A673 (cell line): ENCODE measurements at regions of chr16 and their contacts with region 1.

Region 1: GRCh38 chr16:60013076-60013475 is 1279.0 kb upstream of the GOT2 start:
- DNase-seq: no peak
- H3K4me3 ChIP-seq: no peak overlapping the region
- H3K27ac ChIP-seq: no peak overlapping the region
- H3K4me1 ChIP-seq: no peaks in the 10 kb centered on the region
- H3K27me3 ChIP-seq: peaks cover 5% of the 10 kb centered on the region
- CTCF ChIP-seq: no peak

Region 2: DNA sequence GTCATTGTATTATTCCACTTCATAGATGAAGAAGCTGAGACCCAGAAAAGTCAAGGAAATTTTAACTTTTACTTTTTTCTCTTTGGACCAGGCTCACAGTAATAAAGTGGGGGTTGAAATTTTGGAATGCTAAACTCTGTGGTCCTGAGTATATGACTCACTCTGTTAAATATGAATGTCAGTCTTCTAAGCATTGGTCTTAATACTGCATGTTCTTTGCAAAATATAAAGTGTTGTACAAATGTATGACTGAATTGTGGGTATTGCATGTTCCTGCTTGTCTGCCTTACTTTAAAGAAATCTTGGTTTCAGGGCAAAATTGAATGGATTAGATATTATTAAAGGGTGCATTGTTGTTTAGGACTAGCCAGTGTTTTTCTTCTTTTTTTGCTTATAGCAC is 328.2 kb before region 1 on chr16:
- CTCF ChIA-PET with region 1: no interaction called
- POLR2A ChIA-PET with region 1: no interaction called
- intact Hi-C with region 1: no loop called
- DNase-seq: no peak
- H3K4me3 ChIP-seq: no peak overlapping the region
- H3K27ac ChIP-seq: no peak overlapping the region
- H3K4me1 ChIP-seq: no peaks in the 10 kb centered on the region
- H3K27me3 ChIP-seq: no peaks in the 10 kb centered on the region
- CTCF ChIP-seq: no peak

Region 3: GRCh38 chr16:59740858-59741257 is 272.2 kb before region 1 on chr16:
- CTCF ChIA-PET with region 1: no interaction called
- POLR2A ChIA-PET with region 1: no interaction called
- intact Hi-C with region 1: no loop called
- DNase-seq: no peak
- H3K4me3 ChIP-seq: no peak overlapping the region
- H3K27ac ChIP-seq: no peak overlapping the region
- H3K4me1 ChIP-seq: no peaks in the 10 kb centered on the region
- H3K27me3 ChIP-seq: no peaks in the 10 kb centered on the region
- CTCF ChIP-seq: no peak

Region 4: GRCh38 chr16:59997706-59998105 is 15.4 kb before region 1 on chr16:
- CTCF ChIA-PET with region 1: no interaction called
- POLR2A ChIA-PET with region 1: interaction called, 14 read pairs
- intact Hi-C with region 1: no loop called
- DNase-seq: no peak
- H3K4me3 ChIP-seq: no peak overlapping the region
- H3K27ac ChIP-seq: no peak overlapping the region
- H3K4me1 ChIP-seq: no peaks in the 10 kb centered on the region
- H3K27me3 ChIP-seq: no peaks in the 10 kb centered on the region
- CTCF ChIP-seq: no peak